Activated CD8-positive, alpha-beta T cell treated with anti-CD3 and anti-CD28 coated beads for 36 hours (primary cell): ENCODE measurements at regions of chr17 and their contacts with region 1.

Region 1: GRCh38 chr17:75749545-75750389 is 15.2 kb downstream of the GALK1 start:
- DNase-seq: peak; percentile 95
- ATAC-seq: peak; percentile 77
- H3K4me3 Mint-ChIP-seq: no peak overlapping the region
- H3K27ac Mint-ChIP-seq: no peak overlapping the region
- H3K4me1 Mint-ChIP-seq: peaks cover 17% of the 10 kb centered on the region
- H3K27me3 Mint-ChIP-seq: peaks cover 1% of the 10 kb centered on the region
- CTCF ChIP-seq: peak; percentile 96

Region 2: DNA sequence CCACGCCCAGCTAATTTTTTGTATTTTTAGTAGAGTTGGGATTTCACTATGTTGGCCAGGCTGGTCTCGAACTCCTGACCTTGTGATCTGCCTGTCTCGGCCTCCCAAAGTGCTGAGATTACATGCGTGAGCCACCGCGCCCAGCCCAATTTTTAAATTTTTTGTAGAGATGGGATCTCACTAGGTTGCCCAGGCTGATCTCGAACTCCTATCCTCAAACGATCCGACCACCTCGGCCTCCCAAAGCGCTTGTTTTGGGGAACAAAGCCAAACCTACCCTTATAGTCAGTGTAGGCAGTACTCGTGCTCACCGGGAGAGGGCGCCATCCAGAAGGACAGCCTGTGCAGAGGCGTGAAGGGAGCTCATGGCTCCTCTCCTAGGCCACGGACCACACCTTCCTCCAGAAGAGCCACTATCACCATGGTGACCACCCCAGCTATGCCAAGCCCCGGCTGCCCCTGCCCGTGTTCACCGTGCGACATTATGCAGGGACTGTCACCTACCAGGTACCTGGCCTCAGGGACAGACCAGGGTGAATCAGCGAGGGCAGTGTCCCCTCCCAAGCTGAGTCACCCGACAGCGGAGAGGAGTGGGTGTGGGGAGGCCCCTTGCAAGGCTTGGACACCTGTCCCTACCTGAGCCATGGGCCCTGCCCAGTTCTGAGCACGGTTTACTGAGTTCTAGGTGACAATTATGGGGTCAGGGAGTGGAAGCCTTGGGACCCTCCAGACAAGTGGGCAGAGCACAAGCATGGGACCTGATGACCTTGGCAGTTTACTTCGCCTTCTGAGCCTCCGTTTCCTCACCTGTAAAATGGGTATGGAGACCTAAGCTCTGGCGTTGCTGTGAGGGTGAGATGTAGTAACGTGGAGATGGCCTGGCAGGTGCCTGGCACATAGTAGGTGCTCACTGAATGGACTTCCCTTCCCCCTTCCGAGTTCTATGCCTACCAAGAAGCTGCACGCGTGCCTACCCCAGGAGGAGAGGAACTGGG is 148.4 kb before region 1 on chr17:
- CTCF ChIA-PET with region 1: interaction called, 68 read pairs
- POLR2A ChIA-PET with region 1: no interaction called
- intact Hi-C with region 1: no loop called
- DNase-seq: peak; percentile 82
- ATAC-seq: peak; percentile 94
- H3K4me3 Mint-ChIP-seq: no peak overlapping the region
- H3K27ac Mint-ChIP-seq: no peak overlapping the region
- H3K4me1 Mint-ChIP-seq: no peaks in the 10 kb centered on the region
- H3K27me3 Mint-ChIP-seq: no peaks in the 10 kb centered on the region
- CTCF ChIP-seq: peak; percentile 75

Region 3: GRCh38 chr17:75645889-75646637 is 103.7 kb before region 1 on chr17:
- CTCF ChIA-PET with region 1: interaction called, 79 read pairs
- POLR2A ChIA-PET with region 1: no interaction called
- intact Hi-C with region 1: no loop called
- DNase-seq: peak; percentile 36
- ATAC-seq: peak; percentile 88
- H3K4me3 Mint-ChIP-seq: no peak overlapping the region
- H3K27ac Mint-ChIP-seq: peak overlapping the region; percentile 60
- H3K4me1 Mint-ChIP-seq: peaks cover 4% of the 10 kb centered on the region
- H3K27me3 Mint-ChIP-seq: no peaks in the 10 kb centered on the region
- CTCF ChIP-seq: no peak

Region 4: GRCh38 chr17:75673487-75673886 is 76.3 kb before region 1 on chr17:
- CTCF ChIA-PET with region 1: interaction called, 347 read pairs
- POLR2A ChIA-PET with region 1: interaction called, 6 read pairs
- intact Hi-C with region 1: loop called (anchors 2 kb)
- DNase-seq: no peak
- ATAC-seq: no peak
- H3K4me3 Mint-ChIP-seq: no peak overlapping the region
- H3K27ac Mint-ChIP-seq: no peak overlapping the region
- H3K4me1 Mint-ChIP-seq: peaks cover 31% of the 10 kb centered on the region
- H3K27me3 Mint-ChIP-seq: no peaks in the 10 kb centered on the region
- CTCF ChIP-seq: no peak

Region 5: DNA sequence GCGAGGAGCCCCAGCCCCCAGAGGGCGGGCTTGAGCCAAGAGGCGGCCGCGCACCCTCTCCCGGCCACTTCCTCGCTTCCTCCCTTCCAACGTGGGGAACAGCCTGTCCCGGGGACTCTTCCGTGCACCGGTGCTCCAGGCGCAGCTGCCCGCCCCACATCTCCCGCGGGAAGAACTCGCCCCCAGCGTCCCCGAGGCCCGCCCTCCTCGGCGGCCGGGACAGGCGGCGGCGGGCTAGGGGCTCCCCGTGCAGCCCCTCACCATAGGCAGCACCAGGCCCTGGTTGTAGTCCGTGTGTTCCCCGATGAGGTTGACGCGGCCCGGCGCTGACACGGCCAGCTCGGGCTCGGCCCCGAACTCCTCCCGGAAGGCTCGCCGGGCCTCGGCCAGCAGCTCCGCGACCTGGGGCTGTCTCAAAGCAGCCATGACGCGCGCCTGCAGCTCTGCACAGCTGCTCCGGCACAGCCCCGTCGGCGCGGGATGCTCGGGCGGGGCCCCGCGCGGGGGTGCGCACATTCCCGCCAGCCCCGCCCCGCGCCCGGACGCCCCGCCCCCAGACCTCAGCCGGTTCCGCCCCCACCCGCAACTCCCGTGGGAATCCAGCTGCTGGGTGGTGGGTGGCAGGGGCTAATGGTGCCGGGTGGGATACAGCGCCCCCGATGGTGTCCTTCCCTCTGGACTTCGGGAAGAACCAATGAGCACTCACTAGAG is 15.1 kb after region 1 on chr17 and contains the start of gene GALK1:
- CTCF ChIA-PET with region 1: interaction called, 92 read pairs
- POLR2A ChIA-PET with region 1: interaction called, 21 read pairs
- intact Hi-C with region 1: no loop called
- DNase-seq: peak; percentile 81
- ATAC-seq: peak; percentile 96
- H3K4me3 Mint-ChIP-seq: peak within 1 kb of the TSS; percentile 79
- H3K27ac Mint-ChIP-seq: peak within 1 kb of the TSS; percentile 78
- H3K4me1 Mint-ChIP-seq: peaks cover 10% of the 10 kb centered on the region
- H3K27me3 Mint-ChIP-seq: no peaks in the 10 kb centered on the region
- CTCF ChIP-seq: peak; percentile 78
- total RNA-seq, gene GALK1: 43.4 to 50.7 TPM

Region 6: DNA sequence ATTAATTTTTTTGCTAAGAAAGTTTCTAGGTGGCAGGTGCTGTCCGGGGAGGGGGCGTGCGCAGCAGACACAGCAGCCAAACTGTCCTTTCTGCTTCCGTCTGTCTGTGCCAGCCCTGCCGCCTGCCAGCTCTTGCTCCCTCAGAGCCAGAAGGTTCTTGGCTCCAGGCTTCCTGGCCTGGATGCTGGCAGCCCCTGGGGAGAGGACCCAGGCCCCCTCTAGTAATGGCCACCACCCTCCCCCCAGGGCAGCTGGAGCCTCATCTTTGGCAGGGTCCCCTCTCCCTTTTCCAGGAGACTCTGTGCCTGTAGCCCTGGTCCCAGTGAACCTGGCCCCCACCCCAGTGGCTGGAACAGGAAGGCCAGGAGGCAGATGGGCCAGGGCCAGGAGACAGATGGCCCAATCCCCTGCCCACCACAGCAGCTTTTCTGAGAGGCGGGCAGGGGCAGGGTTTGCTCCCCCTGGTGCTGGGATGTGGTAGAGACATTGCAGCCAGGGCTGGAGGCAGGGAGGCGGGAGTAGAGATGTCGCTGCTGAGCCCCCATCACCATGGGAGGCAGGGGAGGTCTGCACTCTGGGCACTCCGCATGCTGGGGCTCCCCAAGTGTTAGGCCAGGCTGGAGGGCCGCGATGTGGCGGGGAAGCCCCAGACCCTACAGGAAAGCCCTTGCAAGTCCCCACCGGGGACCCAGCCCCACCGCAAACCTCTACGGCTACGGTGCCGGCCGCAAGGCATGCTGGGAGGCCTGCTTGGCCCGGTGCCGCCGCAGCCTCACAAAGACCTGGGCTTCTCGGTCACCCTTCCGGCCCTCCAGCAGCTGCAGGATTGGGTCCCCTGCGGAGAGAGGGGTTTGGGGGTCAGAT is 77.7 kb after region 1 on chr17:
- CTCF ChIA-PET with region 1: interaction called, 28 read pairs
- POLR2A ChIA-PET with region 1: interaction called, 8 read pairs
- intact Hi-C with region 1: no loop called
- DNase-seq: peak; percentile 81
- ATAC-seq: peak; percentile 69
- H3K4me3 Mint-ChIP-seq: peak overlapping the region; percentile 54
- H3K27ac Mint-ChIP-seq: peak overlapping the region; percentile 94
- H3K4me1 Mint-ChIP-seq: peaks cover 21% of the 10 kb centered on the region
- H3K27me3 Mint-ChIP-seq: no peaks in the 10 kb centered on the region
- CTCF ChIP-seq: peak; percentile 89

Region 7: GRCh38 chr17:76160896-76161528 is 411.2 kb after region 1 on chr17:
- CTCF ChIA-PET with region 1: no interaction called
- POLR2A ChIA-PET with region 1: no interaction called
- intact Hi-C with region 1: no loop called
- DNase-seq: no peak
- ATAC-seq: no peak
- H3K4me3 Mint-ChIP-seq: no peak overlapping the region
- H3K27ac Mint-ChIP-seq: no peak overlapping the region
- H3K4me1 Mint-ChIP-seq: peaks cover 13% of the 10 kb centered on the region
- H3K27me3 Mint-ChIP-seq: no peaks in the 10 kb centered on the region
- CTCF ChIP-seq: no peak